ENCODE measurements at regions of chr12 and their contacts with region 1.

Region 1: DNA sequence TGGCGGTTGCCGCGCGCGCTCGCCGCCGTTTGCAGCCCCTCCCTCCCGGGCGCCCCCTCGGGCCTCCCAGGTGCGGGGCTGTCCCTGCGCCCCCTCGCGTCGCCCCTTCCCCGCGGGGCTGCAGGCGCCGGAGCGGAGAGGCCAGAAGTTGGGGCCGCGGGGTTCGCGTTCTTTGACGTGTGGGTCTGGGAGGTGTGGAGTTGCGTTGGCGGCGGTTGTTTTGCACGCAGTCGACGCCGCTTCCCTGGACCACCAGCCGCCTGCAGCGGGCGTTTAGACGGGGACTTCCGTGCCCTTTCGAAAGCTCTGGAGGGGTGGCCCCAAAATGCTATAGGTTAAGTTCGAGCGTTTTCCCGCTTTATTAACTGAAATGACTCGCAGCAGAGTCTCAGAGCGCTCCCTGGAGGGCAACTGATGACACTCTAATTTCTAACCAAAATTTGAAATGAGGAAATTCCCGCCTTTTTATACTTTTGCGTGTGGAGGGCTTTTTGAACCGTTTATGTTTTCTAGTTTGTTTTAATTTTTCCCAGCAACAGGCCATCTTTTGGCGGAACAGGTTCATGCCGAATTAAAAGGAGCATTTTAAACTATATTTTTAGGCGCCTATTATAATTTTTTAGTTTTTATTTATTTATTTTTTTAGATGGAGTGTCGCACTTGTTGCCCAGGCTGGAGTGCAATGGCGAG is 939 bp downstream of the TMPO start:
- DNase-seq: peak; percentile 81
- H3K4me3 ChIP-seq: peak overlapping the region; percentile 79 to 99 (median 84)
- H3K27ac ChIP-seq: peak overlapping the region; percentile 92 to 97 (median 95)
- H3K4me1 ChIP-seq: peaks cover 0 to 47% (median 39%) of the 10 kb centered on the region in 4 donors
- H3K27me3 ChIP-seq: no peaks in the 10 kb centered on the region
- CTCF ChIP-seq: peak in 3 of 4 experiments; percentile 44 to 67 (median 50)
- EP300 ChIP-seq: no peak
- POLR2A ChIP-seq: no peak

Region 2: DNA sequence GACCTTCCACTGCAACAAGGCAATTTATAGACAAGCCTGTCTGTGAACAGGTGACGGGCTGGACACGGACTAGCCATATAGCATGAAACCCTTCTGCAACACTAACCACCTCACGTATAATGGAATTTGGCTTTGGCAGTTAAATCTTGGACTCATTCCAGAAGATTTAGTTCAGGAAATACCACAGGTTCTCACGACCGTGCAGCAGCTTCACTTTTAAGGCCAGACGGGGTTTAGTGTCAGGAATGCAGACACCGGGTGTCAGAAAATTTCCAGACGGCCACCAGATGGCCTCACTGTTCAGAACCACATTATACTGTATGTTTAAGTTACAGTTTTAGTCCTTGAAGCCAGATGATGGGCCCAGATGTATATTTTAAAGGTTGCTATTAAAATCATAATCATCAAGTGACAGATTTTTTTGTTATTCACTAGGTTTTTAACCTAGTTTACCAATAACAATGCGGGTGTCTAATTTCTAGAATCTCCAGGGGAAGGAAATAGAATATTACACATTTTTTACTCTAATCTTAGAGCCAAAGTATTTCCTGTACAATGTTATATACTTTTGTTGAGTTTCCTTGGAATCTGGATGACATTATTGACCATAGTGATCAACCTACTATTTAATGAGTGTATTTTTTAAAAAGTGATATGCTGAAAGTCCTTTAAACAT is 91.5 kb before region 1 on chr12:
- intact Hi-C with region 1: loop called (anchors 2 kb)
- DNase-seq: no peak
- H3K4me3 ChIP-seq: no peak overlapping the region
- H3K27ac ChIP-seq: no peak overlapping the region
- H3K4me1 ChIP-seq: peaks cover 0 to 18% (median 10%) of the 10 kb centered on the region in 4 donors
- H3K27me3 ChIP-seq: no peaks in the 10 kb centered on the region
- CTCF ChIP-seq: peak; percentile 23 to 74 (median 56)
- EP300 ChIP-seq: no peak
- POLR2A ChIP-seq: no peak

Region 3: DNA sequence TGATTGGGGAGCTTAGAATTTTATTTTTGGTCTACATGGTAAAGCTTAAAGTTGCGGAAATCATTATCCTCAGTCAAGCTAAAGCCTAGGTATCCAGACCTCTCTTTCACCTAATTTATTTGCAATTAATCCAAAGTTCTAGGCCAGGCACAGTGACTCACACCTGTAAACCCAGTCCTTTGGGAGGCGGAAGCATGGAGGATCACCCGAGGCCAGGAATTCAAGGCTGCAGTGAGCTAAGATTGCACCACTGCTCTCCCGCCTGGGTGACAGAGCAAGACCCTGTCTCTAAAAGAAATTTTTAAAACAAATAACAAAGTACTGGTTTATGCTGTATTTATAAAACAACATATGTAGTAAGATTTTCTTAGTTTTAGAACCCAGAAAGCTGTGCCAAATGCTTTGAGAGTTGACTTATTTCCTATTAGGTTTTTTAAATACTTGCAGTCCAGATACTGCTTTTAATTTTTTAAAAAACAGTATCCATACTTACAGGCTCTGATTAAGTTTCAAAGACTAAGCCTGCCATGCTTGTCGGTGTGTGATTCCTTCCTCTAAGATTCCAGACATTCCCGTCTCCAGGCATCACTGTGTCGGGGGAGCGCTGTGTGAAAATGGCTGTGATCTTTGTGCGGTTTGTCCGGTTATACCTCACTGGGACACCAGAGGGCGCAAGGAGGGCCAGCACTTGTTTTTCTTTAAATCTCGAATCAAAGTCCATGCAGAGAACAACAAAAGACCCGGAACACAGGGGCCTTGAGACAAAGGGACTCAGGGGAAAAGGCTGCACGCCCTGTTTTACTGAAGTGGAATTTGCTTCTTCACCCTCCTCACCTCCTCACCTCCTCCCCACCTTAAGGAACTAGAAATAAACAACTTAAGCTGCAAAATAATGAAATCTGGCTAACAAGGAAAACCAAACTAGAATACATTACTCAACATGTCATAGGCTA is 25.6 kb before region 1 on chr12:
- intact Hi-C with region 1: loop called (anchors 1 kb)
- DNase-seq: peak; percentile 91
- H3K4me3 ChIP-seq: no peak overlapping the region
- H3K27ac ChIP-seq: peak overlapping the region; percentile 67 to 74 (median 72)
- H3K4me1 ChIP-seq: peaks cover 0 to 10% (median 7%) of the 10 kb centered on the region in 4 donors
- H3K27me3 ChIP-seq: no peaks in the 10 kb centered on the region
- CTCF ChIP-seq: peak; percentile 78 to 85 (median 82)
- EP300 ChIP-seq: no peak
- POLR2A ChIP-seq: no peak

Region 4: GRCh38 chr12:98503592-98504367 is 12.5 kb before region 1 on chr12:
- intact Hi-C with region 1: loop called (anchors 1 kb)
- DNase-seq: peak; percentile 97
- H3K4me3 ChIP-seq: peak overlapping the region; percentile 53 to 66 (median 59)
- H3K27ac ChIP-seq: peak overlapping the region; percentile 91 to 97 (median 94)
- H3K4me1 ChIP-seq: peaks cover 0 to 10% (median 4%) of the 10 kb centered on the region in 4 donors
- H3K27me3 ChIP-seq: no peaks in the 10 kb centered on the region
- CTCF ChIP-seq: no peak
- EP300 ChIP-seq: no peak
- POLR2A ChIP-seq: peak in 1 of 2 donors; percentile 41

Region 5: DNA sequence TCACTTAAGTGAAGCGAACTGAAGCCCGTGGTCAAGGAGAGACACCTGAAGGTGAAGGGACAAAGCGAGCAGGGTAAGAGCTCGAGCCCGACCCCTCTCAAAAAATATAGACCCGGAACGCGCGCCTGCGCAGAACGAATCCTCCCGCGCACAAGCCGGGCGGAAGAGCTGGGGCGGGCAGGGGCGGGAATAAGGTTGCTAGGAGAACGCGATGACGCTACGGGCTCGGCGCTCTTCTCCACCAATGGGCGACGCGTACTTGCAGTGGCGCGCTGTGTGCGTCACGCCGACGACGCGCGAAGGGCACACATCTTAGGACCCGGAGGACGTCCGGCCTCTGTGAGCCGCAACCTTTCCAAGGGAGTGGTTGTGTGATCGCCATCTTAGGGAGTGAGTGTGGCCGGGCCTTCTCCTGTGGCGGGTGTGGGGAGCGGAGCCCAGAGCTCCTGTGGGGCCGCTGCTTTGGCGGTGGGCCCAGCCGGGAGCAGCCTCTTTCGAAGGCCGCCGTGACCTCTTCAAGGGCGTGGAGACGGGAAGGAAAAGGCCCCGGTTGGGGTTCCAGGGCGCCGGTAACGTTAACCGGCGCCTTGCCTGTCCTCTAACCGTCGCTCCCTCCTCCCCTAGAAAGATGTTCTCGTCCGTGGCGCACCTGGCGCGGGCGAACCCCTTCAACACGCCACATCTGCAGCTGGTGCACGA is 77.2 kb after region 1 on chr12 and contains the start of gene SLC25A3:
- intact Hi-C with region 1: loop called (anchors 5 kb)
- DNase-seq: peak; percentile 98
- H3K4me3 ChIP-seq: peak within 1 kb of the TSS; percentile 76 to 98 (median 88)
- H3K27ac ChIP-seq: peak within 1 kb of the TSS; percentile 94 to 100 (median 96)
- H3K4me1 ChIP-seq: peaks cover 0 to 40% (median 30%) of the 10 kb centered on the region in 4 donors
- H3K27me3 ChIP-seq: no peaks in the 10 kb centered on the region
- CTCF ChIP-seq: no peak
- EP300 ChIP-seq: peak in 1 of 4 donors; percentile 6
- POLR2A ChIP-seq: peak; percentile 96 to 97
- total RNA-seq, gene SLC25A3: 525 to 641 (median 599) TPM

Region 6: DNA sequence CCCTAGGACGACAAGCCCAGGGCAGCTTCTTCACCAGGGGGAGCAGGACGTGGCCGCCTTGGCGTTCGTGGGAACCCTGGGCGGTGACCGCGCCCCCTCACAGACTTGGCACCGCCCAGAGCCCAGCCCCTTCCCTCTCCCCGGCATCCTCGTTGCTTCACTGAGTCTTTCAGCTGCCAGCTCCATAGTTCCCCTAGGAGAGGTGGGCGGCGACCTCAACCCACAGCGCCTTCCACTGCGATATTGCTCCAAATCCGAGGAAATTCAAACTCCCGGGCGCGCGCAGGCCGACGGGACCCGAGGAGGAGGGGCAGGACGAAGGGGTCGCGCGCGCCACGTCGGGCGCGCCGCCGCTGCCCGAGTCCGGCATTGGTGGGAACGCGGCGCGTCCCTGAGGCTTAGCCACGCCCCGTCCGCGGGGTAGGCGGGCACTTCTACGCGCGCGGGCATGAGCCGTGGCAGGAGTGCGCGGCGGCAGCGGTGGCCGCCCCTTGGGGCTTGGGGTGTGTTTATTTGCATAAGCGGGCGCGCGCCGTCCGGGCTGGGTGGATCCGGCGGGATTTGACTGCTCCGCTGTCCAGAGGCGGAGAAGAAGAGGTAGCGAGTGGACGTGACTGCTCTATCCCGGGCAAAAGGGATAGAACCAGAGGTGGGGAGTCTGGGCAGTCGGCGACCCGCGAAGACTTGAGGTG is 128.5 kb after region 1 on chr12 and contains the starts of genes APAF1 and IKBIP:
- intact Hi-C with region 1: loop called (anchors 5 kb)
- DNase-seq: peak; percentile 97
- H3K4me3 ChIP-seq: peak within 1 kb of the TSS; percentile 85 to 97 (median 92)
- H3K27ac ChIP-seq: peak within 1 kb of the TSS; percentile 86 to 93 (median 88)
- H3K4me1 ChIP-seq: peaks cover 0 to 33% (median 18%) of the 10 kb centered on the region in 4 donors
- H3K27me3 ChIP-seq: no peaks in the 10 kb centered on the region
- CTCF ChIP-seq: no peak
- EP300 ChIP-seq: no peak
- POLR2A ChIP-seq: peak; percentile 68 to 82
- total RNA-seq, gene APAF1: 6.2 to 14.6 (median 9.4) TPM
- total RNA-seq, gene IKBIP: 6.8 to 15.2 (median 10.8) TPM

Region 7: DNA sequence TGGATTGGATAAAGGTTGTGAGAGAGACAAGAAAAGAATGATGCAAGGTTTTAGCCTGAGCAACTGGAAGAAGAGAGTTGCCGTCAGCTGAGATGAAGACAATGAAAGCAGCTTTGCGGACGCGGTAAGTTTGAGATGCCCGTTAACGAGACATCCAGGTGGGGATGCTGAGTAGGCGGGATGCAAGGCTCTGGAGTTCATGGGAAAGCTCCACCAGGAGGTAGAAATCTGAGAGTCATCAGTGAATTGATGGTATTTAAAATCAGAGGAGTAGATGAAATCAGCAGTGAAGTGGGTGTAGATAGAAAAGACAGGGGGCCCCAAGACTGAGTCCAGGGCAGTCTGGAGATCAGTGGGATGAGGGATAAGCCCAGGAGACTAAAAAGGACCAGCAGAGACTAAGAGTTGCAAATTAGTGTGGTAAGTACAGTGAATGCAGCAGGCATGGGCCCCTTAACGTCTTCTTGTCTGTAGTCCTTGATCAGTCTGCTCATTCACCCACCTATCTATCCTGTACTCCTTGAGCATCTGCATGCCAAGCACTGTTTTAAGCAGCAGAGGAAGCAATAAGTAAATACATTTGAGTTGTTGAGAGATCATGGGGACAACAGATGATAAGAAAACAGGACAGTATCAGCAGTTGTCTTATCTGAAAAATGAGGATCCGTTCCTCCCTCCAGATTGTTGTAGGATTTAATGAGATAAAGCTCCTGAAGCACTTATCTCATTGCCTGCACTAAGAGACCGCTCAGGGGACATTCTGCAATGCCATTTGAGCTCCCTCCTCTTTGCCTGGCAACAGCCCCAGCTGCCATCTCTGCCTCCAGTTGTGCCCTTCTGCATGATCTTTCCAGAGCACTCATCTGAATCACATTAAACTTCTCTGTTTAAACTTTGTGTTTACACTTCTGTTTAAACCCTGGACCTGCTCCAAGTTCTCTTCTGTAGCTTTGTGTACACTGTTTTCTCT is 220.3 kb after region 1 on chr12:
- intact Hi-C with region 1: no loop called
- DNase-seq: no peak
- H3K4me3 ChIP-seq: no peak overlapping the region
- H3K27ac ChIP-seq: no peak overlapping the region
- H3K4me1 ChIP-seq: peaks cover 0 to 13% (median 9%) of the 10 kb centered on the region in 4 donors
- H3K27me3 ChIP-seq: no peaks in the 10 kb centered on the region
- CTCF ChIP-seq: no peak
- EP300 ChIP-seq: no peak
- POLR2A ChIP-seq: no peak

Measured in sigmoid colon (tissue), 7 donors.